HCT116 (cell line): ENCODE measurements at regions of chr11 and their contacts with region 1.

Region 1: GRCh38 chr11:17939542-17939941 is 73.3 kb downstream of the SERGEF start:
- DNase-seq: no peak
- ATAC-seq: no peak
- H3K4me3 ChIP-seq: no peak overlapping the region
- H3K27ac ChIP-seq: no peak overlapping the region
- H3K4me1 ChIP-seq: no peaks in the 10 kb centered on the region
- H3K27me3 ChIP-seq: no peaks in the 10 kb centered on the region
- CTCF ChIP-seq: no peak
- POLR2A ChIP-seq: no peak
- RAD21 ChIP-seq: no peak

Region 2: GRCh38 chr11:18650859-18651557 is 711.5 kb after region 1 on chr11:
- CTCF ChIA-PET with region 1: no interaction called
- POLR2A ChIA-PET with region 1: no interaction called
- RAD21 ChIA-PET with region 1: no interaction called
- intact Hi-C with region 1: loop called (anchors 5 kb)
- DNase-seq: peak; percentile 69
- ATAC-seq: peak; percentile 97
- H3K4me3 ChIP-seq: no peak overlapping the region
- H3K27ac ChIP-seq: no peak overlapping the region
- H3K4me1 ChIP-seq: no peaks in the 10 kb centered on the region; a peak in 1 of 4 replicates
- H3K27me3 ChIP-seq: no peaks in the 10 kb centered on the region
- CTCF ChIP-seq: peak; percentile 69 to 86 (median 79)
- POLR2A ChIP-seq: no peak
- RAD21 ChIP-seq: peak; percentile 80